Activated B cell treated with CpG ODN at 0.5 μM for 24 hours (primary cell): ENCODE measurements at regions of chr9 and their contacts with region 1.

Region 1: DNA sequence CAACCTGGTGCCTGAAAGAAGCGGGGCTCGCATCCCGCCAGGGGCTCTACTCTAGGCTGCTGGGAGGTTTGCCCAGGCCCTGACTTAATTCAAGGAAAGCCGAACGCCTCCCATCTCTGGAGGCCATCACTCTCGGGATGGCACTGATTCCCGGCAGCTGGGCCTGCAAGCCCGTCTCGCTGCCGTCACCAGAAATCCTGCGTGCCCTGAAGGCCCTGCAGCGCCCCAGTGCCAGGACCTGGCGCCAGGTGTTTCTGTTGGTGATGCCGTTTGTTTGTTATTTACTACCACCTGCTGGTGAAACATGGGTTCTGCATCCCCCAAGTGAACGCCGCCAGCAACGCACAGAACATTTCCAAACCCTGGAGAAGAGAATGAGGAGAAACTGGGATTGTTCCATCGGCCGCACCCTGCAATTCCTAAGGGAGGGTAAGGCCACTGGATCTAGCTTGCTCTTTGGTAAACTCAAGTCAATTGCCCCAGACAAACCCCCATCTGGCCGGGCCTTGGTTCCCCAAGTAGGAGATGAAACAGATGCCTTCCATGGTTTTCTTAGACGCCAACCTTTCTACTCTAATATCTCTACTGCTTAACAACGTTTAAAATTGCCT is 77.9 kb downstream of the AK8 start:
- DNase-seq: peak; percentile 40
- ATAC-seq: peak; percentile 91
- H3K4me3 Mint-ChIP-seq: no peak overlapping the region
- H3K27ac Mint-ChIP-seq: no peak overlapping the region
- H3K4me1 Mint-ChIP-seq: peaks cover 13% of the 10 kb centered on the region
- H3K27me3 Mint-ChIP-seq: peaks cover 26% of the 10 kb centered on the region
- CTCF ChIP-seq: no peak

Region 2: GRCh38 chr9:132507746-132508469 is 292.2 kb before region 1 on chr9:
- CTCF ChIA-PET with region 1: interaction called, 10 read pairs
- POLR2A ChIA-PET with region 1: no interaction called
- intact Hi-C with region 1: loop called (anchors 1 kb)
- DNase-seq: peak; percentile 47
- ATAC-seq: peak; percentile 62
- H3K4me3 Mint-ChIP-seq: no peak overlapping the region
- H3K27ac Mint-ChIP-seq: no peak overlapping the region
- H3K4me1 Mint-ChIP-seq: peaks cover 8% of the 10 kb centered on the region
- H3K27me3 Mint-ChIP-seq: peaks cover 12% of the 10 kb centered on the region
- CTCF ChIP-seq: no peak

Region 3: DNA sequence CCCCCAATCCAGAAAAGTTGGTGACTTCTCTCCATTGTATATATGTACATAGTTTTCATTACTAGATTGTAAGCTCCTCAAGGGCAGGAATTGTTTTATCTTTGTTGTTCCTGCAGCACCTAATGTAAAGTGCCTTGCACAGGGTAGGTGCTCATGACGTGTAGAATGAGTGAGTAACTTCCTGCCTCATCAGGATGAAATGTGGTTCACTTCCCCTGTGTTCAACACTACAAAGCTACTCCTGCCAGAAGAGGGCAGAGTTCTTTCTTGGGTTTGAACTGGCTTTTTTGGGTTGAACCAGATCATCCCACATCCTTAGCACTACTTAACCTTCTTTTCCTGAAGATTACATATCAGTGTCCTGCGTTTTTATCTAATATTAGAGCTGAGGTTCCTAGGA is 106.0 kb before region 1 on chr9:
- CTCF ChIA-PET with region 1: interaction called, 3 read pairs
- POLR2A ChIA-PET with region 1: no interaction called
- intact Hi-C with region 1: loop called (anchors 1 kb)
- DNase-seq: no peak
- ATAC-seq: peak; percentile 40
- H3K4me3 Mint-ChIP-seq: no peak overlapping the region
- H3K27ac Mint-ChIP-seq: no peak overlapping the region
- H3K4me1 Mint-ChIP-seq: no peaks in the 10 kb centered on the region
- H3K27me3 Mint-ChIP-seq: peaks cover 3% of the 10 kb centered on the region
- CTCF ChIP-seq: no peak

Region 4: DNA sequence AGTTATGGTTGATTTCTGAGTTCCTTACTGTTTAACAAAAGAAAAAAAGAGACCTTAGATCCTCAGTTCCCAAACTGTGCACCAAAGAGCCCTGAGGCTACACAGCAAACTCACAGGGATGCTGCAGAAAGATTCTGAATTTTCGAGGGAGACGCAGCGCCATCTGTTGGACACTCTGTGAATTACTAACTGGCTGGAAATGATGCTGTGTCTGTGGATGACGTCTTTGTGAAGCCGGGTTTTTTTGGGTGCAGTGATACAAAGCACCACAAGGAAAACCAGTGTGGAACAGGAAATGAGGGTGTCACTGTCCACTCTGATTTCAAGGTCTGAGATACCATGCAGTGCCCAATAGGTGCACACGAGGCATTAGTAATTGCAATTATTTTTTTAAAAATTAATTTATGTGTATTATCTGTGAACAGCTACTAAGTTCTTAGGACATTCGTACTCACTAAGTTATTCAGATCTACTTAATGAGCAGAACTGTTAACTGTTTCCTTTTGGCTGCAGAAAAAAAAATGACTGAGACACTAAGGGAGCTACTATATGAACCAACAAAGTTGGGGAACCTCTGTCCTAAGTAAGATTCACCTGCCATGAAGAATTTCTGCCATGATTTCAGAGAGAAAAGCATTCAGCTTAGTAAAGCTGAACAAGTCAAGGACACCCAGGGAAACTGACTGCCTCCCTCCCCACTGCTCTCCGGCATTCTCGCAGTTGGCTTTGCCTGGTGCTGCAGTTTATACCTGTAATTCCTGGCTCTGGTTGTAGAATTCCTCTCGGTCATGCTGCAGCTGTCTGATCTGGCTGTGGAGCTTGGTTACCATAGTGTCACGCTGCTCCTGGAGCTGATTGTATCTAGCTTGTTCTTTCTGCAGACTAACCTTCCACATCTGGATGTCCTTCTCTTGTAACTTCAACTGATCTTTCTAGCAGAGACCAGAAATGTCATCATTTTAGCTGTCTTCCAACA is 102.0 kb after region 1 on chr9:
- CTCF ChIA-PET with region 1: interaction called, 7 read pairs
- POLR2A ChIA-PET with region 1: no interaction called
- intact Hi-C with region 1: loop called (anchors 5 kb)
- DNase-seq: peak; percentile 57
- ATAC-seq: peak; percentile 98
- H3K4me3 Mint-ChIP-seq: no peak overlapping the region
- H3K27ac Mint-ChIP-seq: no peak overlapping the region
- H3K4me1 Mint-ChIP-seq: peaks cover 5% of the 10 kb centered on the region
- H3K27me3 Mint-ChIP-seq: no peaks in the 10 kb centered on the region
- CTCF ChIP-seq: peak; percentile 54